ENCODE measurements at regions of chr1 and their contacts with region 1.

Region 1: DNA sequence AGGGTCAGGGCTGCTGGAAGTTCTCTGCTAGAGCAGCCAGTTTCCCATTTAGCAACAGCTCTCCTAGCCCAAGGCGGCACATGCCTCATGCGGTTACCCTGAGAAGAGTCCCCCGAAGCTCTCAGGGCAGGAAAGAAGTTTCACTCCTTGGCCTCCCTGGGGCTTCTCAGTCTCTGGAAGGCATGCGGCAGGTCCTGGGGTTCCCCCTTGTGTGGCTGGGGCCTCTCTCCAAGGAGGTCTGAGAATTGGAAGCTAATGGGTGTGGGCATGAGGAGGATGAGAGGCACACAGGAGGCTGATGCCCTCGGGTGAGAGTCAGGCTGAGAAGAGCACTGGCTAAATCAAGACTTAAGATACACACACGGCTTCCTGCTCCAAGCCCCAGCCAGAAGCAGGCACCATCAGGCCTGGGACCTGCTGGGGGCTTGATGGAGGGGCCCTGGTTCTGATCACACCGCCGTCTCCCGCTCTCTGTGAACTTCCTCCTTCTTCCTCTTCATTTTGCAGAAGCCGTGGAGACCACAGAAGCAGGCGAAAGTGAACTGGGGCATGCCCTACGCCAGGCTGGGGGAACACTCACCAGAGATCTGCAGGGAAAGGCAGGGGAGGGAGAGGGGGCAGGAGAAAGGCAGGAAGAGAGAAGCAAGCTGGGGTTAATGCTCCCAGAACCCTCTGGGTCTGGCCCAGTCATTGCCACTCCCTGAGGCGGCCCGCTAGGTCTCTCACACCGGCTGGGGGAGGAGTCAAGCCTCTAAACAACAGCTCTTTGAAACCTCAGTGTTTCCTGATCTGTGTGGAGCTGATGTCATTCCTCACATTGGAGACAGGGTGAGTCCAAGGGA is 15.1 kb downstream of the BLACAT1 start:
- DNase-seq: peak; percentile 53
- ATAC-seq: peak; percentile 16
- H3K4me3 Mint-ChIP-seq: no peak overlapping the region
- H3K27ac Mint-ChIP-seq: no peak overlapping the region; the same call in 1 of the 2 replicates
- H3K4me1 Mint-ChIP-seq: peaks cover 91% of the 10 kb centered on the region
- H3K27me3 Mint-ChIP-seq: peaks cover 27% of the 10 kb centered on the region
- CTCF ChIP-seq: no peak

Region 2: GRCh38 chr1:205396967-205397616 is 43.6 kb before region 1 on chr1:
- CTCF ChIA-PET with region 1: interaction called, 18 read pairs
- POLR2A ChIA-PET with region 1: no interaction called
- DNase-seq: peak; percentile 41
- ATAC-seq: peak; percentile 93
- H3K4me3 Mint-ChIP-seq: no peak overlapping the region
- H3K27ac Mint-ChIP-seq: no peak overlapping the region
- H3K4me1 Mint-ChIP-seq: peaks cover 6% of the 10 kb centered on the region
- H3K27me3 Mint-ChIP-seq: peaks cover 13% of the 10 kb centered on the region
- CTCF ChIP-seq: peak; percentile 71

Region 3: DNA sequence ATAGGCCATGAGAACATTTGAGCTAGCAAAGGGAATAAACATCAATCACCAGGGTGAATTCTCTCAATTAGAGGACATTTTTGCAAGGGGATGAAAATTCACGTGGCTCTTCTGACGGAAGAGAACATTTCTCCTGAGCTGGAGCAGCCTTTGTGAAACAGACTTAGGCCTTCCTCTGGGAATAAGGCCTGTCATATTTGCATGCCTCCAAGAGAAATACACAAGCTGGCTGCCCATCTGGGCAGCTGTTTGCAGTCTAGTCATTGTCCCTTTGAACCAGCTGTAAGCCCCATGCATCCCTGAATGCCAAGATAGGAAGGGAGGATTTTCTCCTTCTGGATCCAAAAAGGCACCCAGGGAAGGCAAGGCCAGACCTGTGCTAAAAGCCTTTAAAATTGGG is 24.4 kb before region 1 on chr1:
- CTCF ChIA-PET with region 1: interaction called, 11 read pairs
- POLR2A ChIA-PET with region 1: no interaction called
- DNase-seq: no peak
- ATAC-seq: no peak
- H3K4me3 Mint-ChIP-seq: no peak overlapping the region
- H3K27ac Mint-ChIP-seq: no peak overlapping the region
- H3K4me1 Mint-ChIP-seq: peaks cover 8% of the 10 kb centered on the region
- H3K27me3 Mint-ChIP-seq: peaks cover 12% of the 10 kb centered on the region
- CTCF ChIP-seq: no peak

Region 4: GRCh38 chr1:205458777-205459566 is 18.3 kb after region 1 on chr1:
- CTCF ChIA-PET with region 1: interaction called, 205 read pairs
- POLR2A ChIA-PET with region 1: interaction called, 48 read pairs
- DNase-seq: peak; percentile 79
- ATAC-seq: peak; percentile 16; the same call in 1 of the 2 replicates
- H3K4me3 Mint-ChIP-seq: no peak overlapping the region
- H3K27ac Mint-ChIP-seq: no peak overlapping the region
- H3K4me1 Mint-ChIP-seq: peaks cover 23% of the 10 kb centered on the region
- H3K27me3 Mint-ChIP-seq: peaks cover 4% of the 10 kb centered on the region
- CTCF ChIP-seq: no peak

Region 5: DNA sequence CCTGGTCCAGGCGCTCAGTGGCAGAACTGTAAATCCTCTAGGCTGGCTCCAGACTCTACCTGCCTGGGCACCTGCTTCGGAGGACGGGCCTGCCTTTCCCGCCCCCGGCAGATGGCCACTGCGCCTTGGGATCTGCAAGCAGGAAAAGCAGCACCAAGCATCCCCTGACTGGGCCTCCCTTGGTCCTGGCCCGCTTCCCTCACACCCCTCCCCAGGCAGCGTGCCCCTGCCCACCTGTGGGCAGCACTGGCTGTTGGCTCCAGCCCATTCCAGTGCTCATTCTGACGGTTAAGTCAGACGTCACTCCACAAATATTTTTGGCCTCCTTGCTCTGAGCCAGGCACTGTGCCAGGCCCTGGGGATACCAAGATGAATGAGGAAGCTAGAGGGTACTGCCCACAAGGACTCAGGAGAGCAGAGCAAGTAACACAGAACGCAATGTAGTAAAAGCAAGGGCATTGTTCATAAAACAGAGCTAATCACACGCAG is 37.1 kb after region 1 on chr1:
- CTCF ChIA-PET with region 1: interaction called, 16 read pairs
- POLR2A ChIA-PET with region 1: interaction called, 5 read pairs
- DNase-seq: no peak
- ATAC-seq: no peak; the same call in 1 of the 2 replicates
- H3K4me3 Mint-ChIP-seq: no peak overlapping the region
- H3K27ac Mint-ChIP-seq: no peak overlapping the region
- H3K4me1 Mint-ChIP-seq: peaks cover 47% of the 10 kb centered on the region
- H3K27me3 Mint-ChIP-seq: peaks cover 42% of the 10 kb centered on the region
- CTCF ChIP-seq: no peak

Region 6: DNA sequence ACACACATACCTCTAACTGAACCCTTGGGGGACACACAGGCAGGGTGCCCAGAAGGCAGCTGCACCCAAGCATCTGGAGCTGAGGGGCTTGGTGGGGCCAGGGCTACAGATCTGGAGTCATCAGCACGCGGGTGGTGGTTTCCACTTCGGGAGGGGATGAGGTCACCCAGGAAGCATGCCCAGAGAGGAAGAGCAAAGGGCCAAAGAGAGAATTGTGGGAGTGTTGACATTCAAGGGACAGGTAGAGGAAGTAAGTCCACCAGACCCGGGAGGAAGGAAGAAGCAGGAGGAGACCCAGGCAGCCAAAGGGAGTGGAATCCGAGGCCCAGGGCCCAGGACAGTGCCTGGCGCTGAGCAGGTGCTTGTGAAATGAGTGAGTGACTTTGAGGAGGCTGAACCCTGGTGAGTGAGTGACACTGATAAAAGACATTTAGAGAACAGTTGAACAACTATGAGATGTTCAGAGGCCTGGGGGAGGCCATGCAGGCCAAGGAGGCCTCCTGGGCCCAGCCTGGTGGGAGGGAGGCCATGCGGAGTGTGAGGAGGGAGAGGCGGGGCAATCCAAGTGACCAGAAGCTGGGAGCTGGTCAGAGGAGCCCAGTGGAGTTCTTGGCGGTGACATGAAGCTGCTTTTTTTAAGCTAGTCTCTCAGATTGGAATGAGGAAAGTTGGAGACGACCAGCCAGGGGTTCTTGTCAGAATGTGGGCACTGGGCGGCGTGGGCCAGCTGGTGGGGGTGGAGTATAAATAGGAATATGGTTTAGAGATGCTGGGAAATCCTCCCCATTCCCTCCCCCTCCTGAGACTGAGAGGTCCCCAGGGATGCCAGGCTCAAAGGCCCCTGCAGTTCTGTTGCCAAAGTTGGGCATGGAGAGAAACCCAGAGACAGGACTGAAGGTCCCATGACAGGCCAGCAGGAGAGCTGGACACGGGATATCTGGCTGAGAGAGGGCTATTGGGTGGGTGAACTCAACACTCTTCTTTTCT is 71.7 kb after region 1 on chr1:
- CTCF ChIA-PET with region 1: interaction called, 15 read pairs
- POLR2A ChIA-PET with region 1: interaction called, 3 read pairs
- DNase-seq: no peak
- ATAC-seq: no peak
- H3K4me3 Mint-ChIP-seq: no peak overlapping the region
- H3K27ac Mint-ChIP-seq: peak overlapping the region; percentile 51
- H3K4me1 Mint-ChIP-seq: peaks cover 53% of the 10 kb centered on the region
- H3K27me3 Mint-ChIP-seq: no peaks in the 10 kb centered on the region
- CTCF ChIP-seq: no peak